T-cell (primary cell): ENCODE measurements at regions of chr7 and their contacts with region 1.

Region 1: GRCh38 chr7:140003913-140004382 is 58.8 kb downstream of the PARP12 start:
- DNase-seq: peak in 8 of 35 experiments; percentile 4 to 51 (median 10)
- ATAC-seq: peak in 1 of 4 experiments; percentile 27
- H3K4me3 ChIP-seq: no peak overlapping the region
- H3K4me3 Mint-ChIP-seq: no peak overlapping the region
- H3K27ac ChIP-seq: no peak overlapping the region
- H3K27ac Mint-ChIP-seq: no peak overlapping the region
- H3K4me1 ChIP-seq: no peaks in the 10 kb centered on the region
- H3K4me1 Mint-ChIP-seq: no peaks in the 10 kb centered on the region
- H3K27me3 ChIP-seq: no peaks in the 10 kb centered on the region
- H3K27me3 Mint-ChIP-seq: no peaks in the 10 kb centered on the region

Region 2: DNA sequence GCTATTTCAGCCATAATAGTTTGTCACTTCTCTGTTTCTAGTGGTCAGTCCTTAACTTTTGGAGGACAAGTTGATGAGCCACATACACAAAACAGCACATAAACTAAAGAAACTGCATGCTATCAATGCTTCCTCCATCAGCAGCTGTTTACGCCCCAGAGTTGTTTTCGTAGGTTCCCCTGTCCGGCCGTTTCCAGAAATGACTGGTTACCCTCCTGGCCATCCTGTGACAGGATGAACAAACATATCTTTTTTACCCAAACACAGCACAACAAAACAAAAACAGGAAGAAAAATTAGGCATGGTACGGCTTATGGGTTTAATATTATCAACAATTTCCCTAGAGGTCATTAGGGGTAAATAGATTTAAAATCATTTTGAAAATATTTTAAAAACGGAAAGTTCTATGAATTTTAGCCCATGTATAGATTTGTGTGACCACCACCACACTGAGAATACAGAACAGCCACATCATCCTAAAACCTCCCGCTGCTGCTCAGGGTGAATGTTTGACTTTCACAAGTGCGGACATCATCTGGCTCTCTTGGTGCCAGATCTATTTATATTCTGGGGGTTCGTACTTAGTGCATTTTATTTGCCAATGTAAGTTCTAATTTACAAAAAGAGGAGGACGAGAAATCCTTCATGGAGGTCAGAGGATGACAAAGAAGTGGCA is 301.0 kb before region 1 on chr7:
- CTCF ChIA-PET with region 1: no interaction called
- POLR2A ChIA-PET with region 1: interaction called in 1 of 2 experiments, 11 read pairs
- DNase-seq: no peak
- ATAC-seq: no peak
- H3K4me3 ChIP-seq: no peak overlapping the region
- H3K4me3 Mint-ChIP-seq: no peak overlapping the region
- H3K27ac ChIP-seq: no peak overlapping the region
- H3K27ac Mint-ChIP-seq: no peak overlapping the region
- H3K4me1 ChIP-seq: no peaks in the 10 kb centered on the region
- H3K4me1 Mint-ChIP-seq: peaks cover 11 to 36% (median 31%) of the 10 kb centered on the region in 3 donors
- H3K27me3 ChIP-seq: no peaks in the 10 kb centered on the region
- H3K27me3 Mint-ChIP-seq: no peaks in the 10 kb centered on the region

Region 3: GRCh38 chr7:140397784-140398750 is 394.1 kb after region 1 on chr7 and contains the start of gene SLC37A3:
- CTCF ChIA-PET with region 1: interaction called in 1 of 2 experiments, 10 read pairs
- POLR2A ChIA-PET with region 1: no interaction called
- DNase-seq: peak; percentile 62 to 89 (median 81)
- ATAC-seq: peak; percentile 97 to 99 (median 99)
- H3K4me3 ChIP-seq: peak within 1 kb of the TSS; percentile 71 to 82
- H3K4me3 Mint-ChIP-seq: peak within 1 kb of the TSS; percentile 86 to 95 (median 93)
- H3K27ac ChIP-seq: peak within 1 kb of the TSS; percentile 28
- H3K27ac Mint-ChIP-seq: peak within 1 kb of the TSS; percentile 77 to 84
- H3K4me1 ChIP-seq: peaks cover 2 to 22% of the 10 kb centered on the region in 2 experiments
- H3K4me1 Mint-ChIP-seq: peaks cover 26 to 29% (median 27%) of the 10 kb centered on the region in 3 donors
- H3K27me3 ChIP-seq: no peaks in the 10 kb centered on the region
- H3K27me3 Mint-ChIP-seq: no peaks in the 10 kb centered on the region
- total RNA-seq, gene SLC37A3: 23.2 to 50.5 (median 38.1) TPM